MCF 10A (cell line): ENCODE measurements at regions of chr18 and their contacts with region 1.

Region 1: DNA sequence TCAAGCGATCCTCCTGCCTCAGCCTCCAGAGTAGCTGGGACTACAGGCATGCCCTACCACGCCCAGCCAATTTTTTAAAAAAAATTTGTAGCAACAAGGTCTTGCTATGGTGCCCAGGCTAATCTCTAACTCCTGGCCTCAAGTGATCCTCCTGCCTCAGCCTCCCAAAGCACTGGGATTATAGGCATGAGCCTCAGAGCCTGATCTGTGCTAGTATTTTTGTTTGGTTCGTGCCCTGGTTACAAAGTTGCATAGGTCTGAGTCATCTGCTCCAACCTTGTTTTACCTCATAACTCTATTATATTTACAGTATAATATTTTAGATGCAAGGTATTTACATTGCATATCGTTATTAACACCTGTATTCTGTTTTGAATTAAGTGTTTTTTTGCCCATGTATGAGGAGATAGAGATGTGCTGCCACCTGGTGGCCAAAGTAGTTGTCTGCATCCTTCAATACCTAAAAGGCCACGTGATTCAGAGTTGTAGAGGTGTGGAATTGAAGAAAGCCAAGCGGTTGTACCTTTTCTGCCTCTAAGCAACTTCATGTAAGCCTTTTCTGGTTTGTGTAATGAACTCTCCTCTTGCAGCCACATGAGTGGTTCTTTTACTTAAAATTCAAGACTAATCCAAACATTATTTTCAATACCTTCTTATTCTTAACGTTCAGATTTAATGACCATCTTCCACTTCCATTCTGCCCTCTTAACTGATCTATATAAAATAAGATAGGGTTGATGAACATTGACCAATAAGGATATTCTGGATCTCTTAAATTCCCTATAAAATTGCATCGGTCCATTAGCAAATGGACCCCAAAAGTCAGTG is 19.9 kb upstream of the CABYR start:
- DNase-seq: peak; percentile 86
- H3K4me3 Mint-ChIP-seq: no peak overlapping the region
- H3K27ac Mint-ChIP-seq: no peak overlapping the region
- H3K4me1 Mint-ChIP-seq: peaks cover under 1% of the 10 kb centered on the region
- H3K27me3 Mint-ChIP-seq: no peaks in the 10 kb centered on the region
- CTCF ChIP-seq: peak; percentile 75

Region 2: DNA sequence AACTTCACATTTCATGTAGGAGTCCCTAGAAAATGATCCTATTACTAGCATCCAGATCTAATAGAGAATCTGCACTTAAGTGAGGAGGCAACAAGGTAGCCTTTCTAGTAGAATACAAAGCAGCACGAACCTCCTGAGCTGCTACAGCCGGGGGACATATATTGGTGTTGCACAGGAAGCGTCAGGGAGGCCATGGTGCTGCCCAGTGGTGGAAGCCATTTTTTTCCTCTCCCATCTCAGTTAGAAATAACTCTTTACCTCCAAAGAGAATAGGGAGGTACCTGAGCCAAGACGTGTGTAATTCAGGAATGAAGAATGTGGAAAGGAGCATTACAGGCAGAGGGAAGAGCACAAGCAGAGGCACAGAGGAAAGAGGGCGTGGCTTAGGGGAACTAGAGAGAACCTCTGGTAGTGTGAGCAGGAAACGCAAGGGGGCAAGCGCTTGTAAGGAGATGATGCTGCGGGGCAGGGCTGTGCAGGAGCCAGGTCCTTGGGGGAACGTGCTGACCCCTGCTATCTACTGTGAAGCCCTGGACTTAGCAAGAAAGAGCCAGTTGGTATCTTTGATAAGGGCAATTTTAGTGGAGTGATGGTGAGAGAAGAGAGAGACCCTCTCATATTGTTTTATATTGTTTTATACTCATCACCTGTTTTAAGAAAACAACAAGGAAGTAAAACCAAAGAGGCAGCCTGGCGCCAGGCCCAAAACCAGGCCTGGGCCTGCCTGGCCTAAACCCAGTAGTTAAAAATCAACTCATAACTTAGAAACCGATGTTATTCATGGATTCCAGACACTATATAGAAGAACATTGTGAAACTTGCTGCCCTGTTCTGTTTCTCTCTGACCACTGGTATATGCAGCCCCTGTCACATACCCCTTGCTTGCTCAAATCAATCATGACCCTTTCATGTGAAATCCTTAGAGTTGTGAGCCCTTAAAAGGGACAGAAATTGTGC is 154.4 kb before region 1 on chr18:
- CTCF ChIA-PET with region 1: interaction called, 10 read pairs
- POLR2A ChIA-PET with region 1: interaction called, 8 read pairs
- intact Hi-C with region 1: loop called (anchors 2 kb)
- DNase-seq: no peak
- H3K4me3 Mint-ChIP-seq: no peak overlapping the region
- H3K27ac Mint-ChIP-seq: no peak overlapping the region
- H3K4me1 Mint-ChIP-seq: peaks cover 17% of the 10 kb centered on the region
- H3K27me3 Mint-ChIP-seq: no peaks in the 10 kb centered on the region
- CTCF ChIP-seq: no peak